ENCODE measurements at regions of chr12 and their contacts with region 1.

Region 1: GRCh38 chr12:124636138-124636978 is 68.9 kb upstream of the NCOR2 start:
- DNase-seq: peak; percentile 36 to 62
- ATAC-seq: no peak
- H3K4me3 ChIP-seq: no peak overlapping the region
- H3K27ac ChIP-seq: no peak overlapping the region
- H3K4me1 ChIP-seq: peaks cover 11 to 19% of the 10 kb centered on the region in 2 donors
- H3K27me3 ChIP-seq: no peaks in the 10 kb centered on the region
- CTCF ChIP-seq: no peak
- POLR2A ChIP-seq: no peak

Region 2: GRCh38 chr12:124087266-124088051 is 548.9 kb before region 1 on chr12:
- in situ Hi-C with region 1: no loop called
- intact Hi-C with region 1: no loop called
- DNase-seq: no peak
- ATAC-seq: no peak
- H3K4me3 ChIP-seq: no peak overlapping the region
- H3K27ac ChIP-seq: no peak overlapping the region
- H3K4me1 ChIP-seq: no peaks in the 10 kb centered on the region
- H3K27me3 ChIP-seq: no peaks in the 10 kb centered on the region
- CTCF ChIP-seq: no peak
- POLR2A ChIP-seq: no peak

Region 3: GRCh38 chr12:124588751-124589267 is 47.5 kb before region 1 on chr12:
- in situ Hi-C with region 1: loop called in 1 of 4 experiments (anchors 10 kb)
- intact Hi-C with region 1: no loop called
- DNase-seq: peak; percentile 60 to 64
- ATAC-seq: peak; percentile 91 to 93
- H3K4me3 ChIP-seq: no peak overlapping the region
- H3K27ac ChIP-seq: peak overlapping the region; percentile 38 to 61 (median 47)
- H3K4me1 ChIP-seq: peaks cover 16 to 19% of the 10 kb centered on the region in 2 donors
- H3K27me3 ChIP-seq: no peaks in the 10 kb centered on the region
- CTCF ChIP-seq: no peak
- POLR2A ChIP-seq: no peak

Region 4: DNA sequence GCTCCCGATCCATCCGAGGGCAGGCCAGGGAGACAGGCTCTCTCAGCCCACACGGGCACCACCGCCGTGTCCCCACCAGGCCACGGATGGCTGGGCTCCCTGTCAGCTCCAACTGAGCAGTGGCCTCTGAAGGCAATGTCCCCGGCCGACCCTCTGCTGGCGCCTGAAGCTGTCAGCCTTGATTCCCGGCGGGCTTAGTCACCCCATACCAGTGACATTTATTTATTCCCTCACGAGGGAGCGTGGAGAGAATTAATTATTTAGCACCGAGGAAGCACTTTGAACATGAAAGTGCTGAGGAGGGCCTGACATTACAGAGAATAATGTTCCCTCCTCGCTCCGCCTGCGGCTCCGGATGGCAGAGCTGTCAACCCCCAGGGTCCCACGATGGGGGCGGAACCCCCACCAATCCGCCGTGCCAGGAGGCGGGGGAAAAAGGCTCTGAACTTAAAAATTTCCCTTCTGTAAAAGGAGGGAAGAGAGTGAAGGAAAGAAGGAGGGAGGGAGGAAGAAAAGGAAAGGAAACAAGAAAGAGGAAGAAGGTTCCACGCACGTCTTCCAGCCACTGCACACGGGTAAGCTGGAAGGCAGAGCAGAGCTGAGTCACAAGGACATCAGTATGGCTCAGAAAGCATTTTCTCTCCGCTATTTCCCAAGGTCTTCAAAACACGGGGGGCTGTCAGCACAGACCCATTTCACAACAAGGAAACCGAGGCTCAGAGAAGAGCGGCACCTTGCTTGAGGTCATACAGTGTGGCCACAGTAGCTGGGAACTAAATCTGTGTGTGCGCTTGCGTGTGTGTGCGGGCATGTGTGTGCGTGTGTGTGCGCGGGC is 39.7 kb after region 1 on chr12:
- in situ Hi-C with region 1: no loop called
- intact Hi-C with region 1: no loop called
- DNase-seq: no peak
- ATAC-seq: peak; percentile 33 to 53
- H3K4me3 ChIP-seq: peak overlapping the region in 2 of 4 donors; percentile 15 to 36
- H3K27ac ChIP-seq: peak overlapping the region; percentile 4 to 45 (median 34)
- H3K4me1 ChIP-seq: peaks cover 15 to 19% of the 10 kb centered on the region in 2 donors
- H3K27me3 ChIP-seq: no peaks in the 10 kb centered on the region
- CTCF ChIP-seq: no peak
- POLR2A ChIP-seq: no peak

Measured in gastrocnemius medialis (tissue), 4 donors.